ENCODE measurements at regions of chr16 and their contacts with region 1.

Region 1: DNA sequence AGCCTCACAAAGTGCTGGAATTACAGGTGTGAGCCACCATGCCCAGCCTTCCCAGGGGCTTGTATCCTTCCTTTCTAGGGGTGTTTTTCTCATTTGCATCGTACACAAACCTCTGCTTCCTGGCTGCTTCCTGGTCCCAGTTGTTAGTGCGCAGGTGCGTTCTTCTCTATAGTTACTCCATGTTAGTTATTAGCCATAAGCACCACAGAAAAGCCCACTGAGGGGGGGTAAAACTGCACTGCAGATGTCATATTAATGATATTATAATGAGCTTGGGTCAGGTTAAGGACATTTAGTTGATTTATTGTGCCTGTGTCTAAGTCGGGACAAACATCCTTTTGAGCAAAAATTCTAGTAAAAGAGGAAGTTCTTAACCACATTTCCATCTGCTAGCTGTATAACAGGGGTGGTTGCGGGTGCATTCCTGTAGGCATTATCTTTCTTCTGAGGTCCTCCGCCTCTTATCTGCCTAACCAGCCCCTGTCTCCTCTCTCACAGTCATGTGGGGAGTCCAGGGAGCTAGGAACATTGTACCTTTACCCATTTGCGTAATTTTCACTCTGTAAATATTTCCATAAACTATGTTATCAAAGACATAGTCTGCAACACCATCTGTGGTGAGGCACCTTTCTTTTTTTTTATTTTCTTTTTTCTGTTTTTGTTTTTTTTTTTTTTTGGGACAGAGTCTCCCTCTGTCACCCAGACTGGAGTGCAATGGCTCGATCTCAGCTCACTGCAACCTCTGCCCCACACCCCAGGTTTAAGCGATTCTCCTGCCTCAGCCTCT is 23.6 kb upstream of the ATF7IP2 start:
- DNase-seq: peak in 9 of 35 experiments; percentile 3 to 26 (median 13)
- ATAC-seq: peak; percentile 64 to 81 (median 76)
- H3K4me3 ChIP-seq: peak overlapping the region in 1 of 2 donors; percentile 7
- H3K4me3 Mint-ChIP-seq: peak overlapping the region; percentile 4 to 73 (median 39)
- H3K27ac ChIP-seq: peak overlapping the region; percentile 49
- H3K27ac Mint-ChIP-seq: peak overlapping the region; percentile 83 to 90
- H3K4me1 ChIP-seq: peaks cover 8 to 16% of the 10 kb centered on the region in 2 experiments
- H3K4me1 Mint-ChIP-seq: peaks cover 14 to 23% (median 19%) of the 10 kb centered on the region in 3 donors
- H3K27me3 ChIP-seq: no peaks in the 10 kb centered on the region
- H3K27me3 Mint-ChIP-seq: peaks cover 0 to 2% of the 10 kb centered on the region in 2 donors

Region 2: DNA sequence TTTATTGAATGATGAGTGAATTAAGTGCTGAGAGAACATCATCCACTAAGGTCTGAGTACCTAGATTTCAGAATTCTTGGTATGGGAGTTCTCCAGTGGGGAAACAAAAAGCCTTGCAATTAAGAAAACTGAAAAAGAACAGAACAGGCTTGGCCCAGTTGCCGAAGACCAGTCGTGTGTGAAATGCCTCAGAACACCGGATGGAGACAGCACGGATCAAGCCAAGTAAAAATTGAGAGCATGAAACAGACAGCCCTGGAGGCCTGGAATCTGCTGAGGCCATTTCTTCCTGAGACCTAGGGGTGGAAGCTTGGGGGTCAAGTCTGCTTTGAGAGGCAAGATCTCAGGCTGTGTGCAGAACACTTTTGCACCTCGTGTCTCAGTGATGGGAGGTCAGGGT is 223.4 kb before region 1 on chr16:
- CTCF ChIA-PET with region 1: no interaction called
- POLR2A ChIA-PET with region 1: no interaction called
- DNase-seq: no peak
- ATAC-seq: no peak
- H3K4me3 ChIP-seq: no peak overlapping the region
- H3K4me3 Mint-ChIP-seq: no peak overlapping the region
- H3K27ac ChIP-seq: no peak overlapping the region
- H3K27ac Mint-ChIP-seq: no peak overlapping the region
- H3K4me1 ChIP-seq: no peaks in the 10 kb centered on the region
- H3K4me1 Mint-ChIP-seq: no peaks in the 10 kb centered on the region
- H3K27me3 ChIP-seq: peaks cover 0 to 2% of the 10 kb centered on the region in 2 experiments
- H3K27me3 Mint-ChIP-seq: no peaks in the 10 kb centered on the region

Region 3: DNA sequence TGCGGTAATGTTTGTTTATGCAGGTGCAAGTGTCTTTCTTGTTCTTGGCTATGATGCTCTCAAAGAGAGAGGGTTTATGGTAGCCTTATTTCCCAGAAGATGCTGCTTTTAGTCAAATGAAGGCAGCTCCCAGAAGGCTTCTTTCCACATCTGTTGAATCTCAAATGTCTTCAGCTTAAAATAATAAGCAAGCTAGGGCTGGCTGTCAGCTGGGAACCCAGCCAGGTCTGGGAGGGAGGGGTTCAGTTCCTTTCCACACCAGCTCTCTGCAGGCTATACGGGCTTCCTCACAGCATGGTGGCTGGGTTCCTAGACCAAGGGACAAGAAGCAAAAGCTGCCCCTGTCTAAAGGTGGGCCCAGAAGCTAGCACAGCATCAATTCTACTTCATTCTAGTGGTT is 23.8 kb before region 1 on chr16:
- CTCF ChIA-PET with region 1: no interaction called
- POLR2A ChIA-PET with region 1: no interaction called
- DNase-seq: no peak
- ATAC-seq: no peak
- H3K4me3 ChIP-seq: no peak overlapping the region
- H3K4me3 Mint-ChIP-seq: no peak overlapping the region
- H3K27ac ChIP-seq: no peak overlapping the region
- H3K27ac Mint-ChIP-seq: no peak overlapping the region
- H3K4me1 ChIP-seq: peaks cover 6 to 13% of the 10 kb centered on the region in 2 experiments
- H3K4me1 Mint-ChIP-seq: peaks cover 15 to 22% (median 21%) of the 10 kb centered on the region in 3 donors
- H3K27me3 ChIP-seq: no peaks in the 10 kb centered on the region
- H3K27me3 Mint-ChIP-seq: no peaks in the 10 kb centered on the region

Region 4: GRCh38 chr16:10405386-10405939 is 43.2 kb after region 1 on chr16:
- CTCF ChIA-PET with region 1: no interaction called
- POLR2A ChIA-PET with region 1: interaction called in 1 of 2 experiments, 10 read pairs
- DNase-seq: no peak
- ATAC-seq: no peak
- H3K4me3 ChIP-seq: no peak overlapping the region
- H3K4me3 Mint-ChIP-seq: no peak overlapping the region
- H3K27ac ChIP-seq: no peak overlapping the region
- H3K27ac Mint-ChIP-seq: no peak overlapping the region
- H3K4me1 ChIP-seq: no peaks in the 10 kb centered on the region
- H3K4me1 Mint-ChIP-seq: peaks cover 12 to 22% (median 20%) of the 10 kb centered on the region in 3 donors
- H3K27me3 ChIP-seq: no peaks in the 10 kb centered on the region
- H3K27me3 Mint-ChIP-seq: no peaks in the 10 kb centered on the region